Naive thymus-derived CD8-positive, alpha-beta T cell (primary cell): ENCODE measurements at regions of chr5 and their contacts with region 1.

Region 1: GRCh38 chr5:132495667-132496190 is 5.2 kb upstream of the IRF1 start:
- DNase-seq: peak; percentile 58 to 80 (median 66)
- ATAC-seq: peak; percentile 49 to 56
- H3K4me3 Mint-ChIP-seq: peak overlapping the region; percentile 92 to 98 (median 96)
- H3K27ac Mint-ChIP-seq: peak overlapping the region; percentile 90 to 99 (median 98)
- H3K4me1 Mint-ChIP-seq: peaks cover 28 to 81% (median 75%) of the 10 kb centered on the region in 4 donors
- H3K27me3 Mint-ChIP-seq: no peaks in the 10 kb centered on the region

Region 2: DNA sequence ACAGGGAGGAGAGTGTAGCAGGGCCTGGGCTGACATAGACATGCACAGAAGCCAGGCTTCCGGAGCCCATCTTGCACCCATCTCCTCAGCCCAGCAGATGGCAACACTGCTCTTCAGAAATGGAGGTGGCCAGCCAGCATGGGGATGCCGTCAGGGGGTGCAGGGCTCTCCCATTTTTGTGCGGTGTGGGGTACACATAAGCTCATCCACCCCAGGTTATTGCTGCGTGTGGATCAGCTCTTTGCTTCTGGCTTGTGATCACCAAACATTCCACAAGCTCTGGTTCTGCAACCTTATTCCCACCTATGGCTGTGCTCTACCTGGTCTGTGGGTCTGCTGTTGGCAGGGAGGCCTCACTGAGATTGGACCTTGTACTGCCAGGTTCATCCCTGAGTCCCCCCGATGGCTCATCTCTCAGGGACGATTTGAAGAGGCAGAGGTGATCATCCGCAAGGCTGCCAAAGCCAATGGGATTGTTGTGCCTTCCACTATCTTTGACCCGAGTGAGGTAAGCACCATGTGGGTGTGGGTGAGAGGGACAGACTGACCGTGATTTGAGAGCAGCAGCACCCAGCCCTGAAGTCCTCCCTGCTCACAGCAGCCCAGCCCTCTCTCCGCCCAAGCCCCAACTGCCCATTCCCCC is 109.0 kb before region 1 on chr5:
- POLR2A ChIA-PET with region 1: interaction called, 96 read pairs
- DNase-seq: peak; percentile 56 to 86 (median 74)
- ATAC-seq: peak; percentile 88 to 92
- H3K4me3 Mint-ChIP-seq: no peak overlapping the region
- H3K27ac Mint-ChIP-seq: peak overlapping the region in 6 of 10 donors; percentile 5 to 81 (median 69)
- H3K4me1 Mint-ChIP-seq: peaks cover 13 to 43% (median 21%) of the 10 kb centered on the region in 4 donors
- H3K27me3 Mint-ChIP-seq: no peaks in the 10 kb centered on the region

Region 3: GRCh38 chr5:132410451-132411381 is 85.0 kb before region 1 on chr5:
- POLR2A ChIA-PET with region 1: interaction called, 178 read pairs
- DNase-seq: peak; percentile 72 to 90 (median 83)
- ATAC-seq: peak; percentile 78 to 79
- H3K4me3 Mint-ChIP-seq: peak overlapping the region; percentile 88 to 99 (median 98)
- H3K27ac Mint-ChIP-seq: peak overlapping the region; percentile 95 to 99 (median 98)
- H3K4me1 Mint-ChIP-seq: peaks cover 36 to 91% (median 79%) of the 10 kb centered on the region in 4 donors
- H3K27me3 Mint-ChIP-seq: no peaks in the 10 kb centered on the region

Region 4: GRCh38 chr5:132426525-132427138 is 69.1 kb before region 1 on chr5:
- POLR2A ChIA-PET with region 1: interaction called, 142 read pairs
- DNase-seq: peak in 5 of 10 donors; percentile 31 to 59 (median 36)
- ATAC-seq: peak; percentile 31 to 40
- H3K4me3 Mint-ChIP-seq: peak overlapping the region; percentile 62 to 90 (median 84)
- H3K27ac Mint-ChIP-seq: peak overlapping the region; percentile 95 to 100 (median 98)
- H3K4me1 Mint-ChIP-seq: peaks cover 51 to 100% (median 98%) of the 10 kb centered on the region in 4 donors
- H3K27me3 Mint-ChIP-seq: no peaks in the 10 kb centered on the region

Region 5: GRCh38 chr5:132456296-132457001 is 39.3 kb before region 1 on chr5:
- POLR2A ChIA-PET with region 1: interaction called, 648 read pairs
- DNase-seq: peak in 8 of 10 donors; percentile 61 to 82 (median 74)
- ATAC-seq: peak; percentile 71 to 79
- H3K4me3 Mint-ChIP-seq: peak overlapping the region; percentile 59 to 85 (median 75)
- H3K27ac Mint-ChIP-seq: peak overlapping the region; percentile 95 to 100 (median 98)
- H3K4me1 Mint-ChIP-seq: peaks cover 53 to 99% (median 92%) of the 10 kb centered on the region in 4 donors
- H3K27me3 Mint-ChIP-seq: no peaks in the 10 kb centered on the region

Region 6: GRCh38 chr5:132473019-132473531 is 22.7 kb before region 1 on chr5:
- POLR2A ChIA-PET with region 1: interaction called, 648 read pairs
- DNase-seq: peak; percentile 58 to 95 (median 86)
- ATAC-seq: peak; percentile 68 to 92
- H3K4me3 Mint-ChIP-seq: peak overlapping the region; percentile 17 to 88 (median 46)
- H3K27ac Mint-ChIP-seq: peak overlapping the region; percentile 93 to 98 (median 94)
- H3K4me1 Mint-ChIP-seq: peaks cover 42 to 96% (median 92%) of the 10 kb centered on the region in 4 donors
- H3K27me3 Mint-ChIP-seq: no peaks in the 10 kb centered on the region

Region 7: GRCh38 chr5:132566657-132567056 is 70.9 kb after region 1 on chr5:
- POLR2A ChIA-PET with region 1: no interaction called
- DNase-seq: no peak
- ATAC-seq: no peak
- H3K4me3 Mint-ChIP-seq: no peak overlapping the region
- H3K27ac Mint-ChIP-seq: peak overlapping the region in 1 of 10 donors; percentile 28
- H3K4me1 Mint-ChIP-seq: peaks cover 6 to 34% (median 16%) of the 10 kb centered on the region in 4 donors
- H3K27me3 Mint-ChIP-seq: no peaks in the 10 kb centered on the region

Region 8: GRCh38 chr5:132943362-132944022 is 447.8 kb after region 1 on chr5:
- POLR2A ChIA-PET with region 1: no interaction called
- DNase-seq: no peak
- ATAC-seq: no peak
- H3K4me3 Mint-ChIP-seq: peak overlapping the region in 1 of 10 donors; percentile 26
- H3K27ac Mint-ChIP-seq: peak overlapping the region in 2 of 10 donors; percentile 18 to 22
- H3K4me1 Mint-ChIP-seq: peaks cover 11 to 67% (median 44%) of the 10 kb centered on the region in 4 donors
- H3K27me3 Mint-ChIP-seq: no peaks in the 10 kb centered on the region